Caco-2 (cell line): ENCODE measurements at regions of chr7 and their contacts with region 1.

Region 1: GRCh38 chr7:151244196-151244840 is 4.2 kb downstream of the SMARCD3 start:
- DNase-seq: peak in 1 of 2 experiments; percentile 49
- H3K4me3 ChIP-seq: no peak overlapping the region
- H3K4me3 Mint-ChIP-seq: no peak overlapping the region
- H3K27ac Mint-ChIP-seq: no peak overlapping the region
- H3K4me1 ChIP-seq: peaks cover 8% of the 10 kb centered on the region; the same call in 1 of the 2 replicates
- H3K4me1 Mint-ChIP-seq: peaks cover 16% of the 10 kb centered on the region
- H3K27me3 ChIP-seq: no peaks in the 10 kb centered on the region
- H3K27me3 Mint-ChIP-seq: no peaks in the 10 kb centered on the region
- CTCF ChIP-seq: peak; percentile 74

Region 2: DNA sequence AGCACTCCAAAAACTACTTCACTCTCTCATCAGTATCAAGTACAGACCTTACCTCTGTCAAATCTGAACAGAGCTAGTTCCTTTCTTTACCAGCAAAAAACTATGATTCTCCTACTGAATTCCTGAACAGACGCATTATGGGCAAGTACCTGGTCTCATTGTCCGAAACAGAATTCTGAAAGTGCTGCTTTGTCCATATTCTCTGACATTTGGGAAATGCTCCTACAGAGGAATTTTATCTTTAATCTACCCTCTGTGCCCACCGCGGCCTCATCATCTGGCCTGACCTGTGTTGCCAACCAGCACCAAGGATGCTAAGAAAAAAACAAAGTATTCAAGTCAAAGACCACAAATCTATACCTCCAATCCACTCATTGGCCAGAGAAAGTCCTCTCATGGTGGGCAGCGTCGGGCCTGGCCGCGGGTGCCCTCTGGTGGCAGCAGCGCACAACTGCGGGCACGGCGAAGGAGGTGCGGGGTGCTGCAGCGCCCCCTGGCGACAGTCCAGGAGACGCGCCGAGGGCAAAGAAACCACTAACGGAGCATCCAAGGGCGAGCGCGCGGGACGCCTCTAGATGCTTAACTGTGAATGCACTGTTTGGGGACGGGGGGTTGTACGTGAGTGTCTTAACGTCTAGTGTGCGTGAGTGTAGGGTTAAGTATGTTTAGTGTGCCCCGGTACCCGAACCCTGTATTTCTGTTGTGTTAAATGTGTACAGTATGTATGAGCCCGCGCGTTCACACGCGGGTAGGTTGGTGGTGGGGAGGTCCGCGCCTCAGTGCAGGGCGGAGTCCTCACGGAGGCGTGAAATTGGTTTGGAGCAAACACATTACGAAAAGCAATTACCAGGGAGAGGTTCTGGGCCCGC is 71.8 kb before region 1 on chr7:
- CTCF ChIA-PET with region 1: no interaction called
- POLR2A ChIA-PET with region 1: no interaction called
- intact Hi-C with region 1: loop called (anchors 2 kb)
- DNase-seq: peak; percentile 63 to 84
- H3K4me3 ChIP-seq: no peak overlapping the region
- H3K4me3 Mint-ChIP-seq: no peak overlapping the region
- H3K27ac Mint-ChIP-seq: no peak overlapping the region
- H3K4me1 ChIP-seq: no peaks in the 10 kb centered on the region
- H3K4me1 Mint-ChIP-seq: peaks cover 5% of the 10 kb centered on the region
- H3K27me3 ChIP-seq: peaks cover 4% of the 10 kb centered on the region
- H3K27me3 Mint-ChIP-seq: peaks cover 33% of the 10 kb centered on the region
- CTCF ChIP-seq: peak; percentile 100

Region 3: DNA sequence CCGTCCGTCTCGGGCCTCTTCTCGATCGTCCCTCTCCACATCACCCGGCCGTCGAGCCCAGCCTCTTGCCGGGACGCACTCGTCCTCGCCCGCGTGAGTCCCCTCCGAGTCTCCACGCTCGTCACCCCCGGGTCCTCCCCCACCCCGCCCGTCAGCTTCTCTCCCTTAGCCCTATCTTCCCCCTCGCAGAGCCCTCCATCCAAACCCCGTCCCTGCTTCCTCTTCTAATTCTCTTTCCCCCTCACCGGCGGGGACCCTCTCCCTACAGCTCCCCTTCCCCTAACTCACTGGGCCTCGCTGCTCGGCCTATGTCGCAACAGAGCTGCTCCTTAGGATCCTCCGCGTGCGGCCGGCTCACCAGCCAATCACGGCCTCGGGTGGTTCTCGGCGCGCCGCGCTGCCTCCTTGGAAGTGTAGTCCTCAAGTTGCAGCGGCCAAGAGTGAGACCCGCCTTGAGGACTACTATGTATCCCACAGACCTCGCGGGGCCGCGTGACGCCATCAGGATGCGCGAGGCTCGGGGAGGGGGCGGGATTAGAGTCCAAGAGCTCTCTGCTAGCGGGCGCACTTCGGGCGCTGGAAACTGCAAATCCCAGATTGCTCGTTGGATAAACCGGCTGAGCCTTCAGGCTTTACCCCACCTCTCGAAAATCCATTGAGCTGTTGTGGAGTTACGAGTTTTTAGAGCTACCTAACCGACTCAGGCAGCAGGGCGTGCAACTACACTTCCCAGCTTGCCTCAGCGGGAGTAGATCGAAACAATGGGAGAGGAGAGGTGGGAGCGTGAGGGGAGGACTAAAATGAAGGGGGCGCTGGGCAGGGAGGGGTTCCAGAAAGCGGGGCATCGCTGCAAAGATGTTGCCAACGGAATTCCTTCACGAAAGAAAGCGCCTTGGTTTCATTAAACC is 17.2 kb before region 1 on chr7 and contains the start of gene ABCF2:
- CTCF ChIA-PET with region 1: interaction called, 22 read pairs
- POLR2A ChIA-PET with region 1: interaction called, 9 read pairs
- intact Hi-C with region 1: loop called (anchors 1 kb)
- DNase-seq: peak; percentile 98 to 99
- H3K4me3 ChIP-seq: peak within 1 kb of the TSS; percentile 81
- H3K4me3 Mint-ChIP-seq: peak within 1 kb of the TSS; percentile 88
- H3K27ac Mint-ChIP-seq: peak within 1 kb of the TSS; percentile 82
- H3K4me1 ChIP-seq: peaks cover 15% of the 10 kb centered on the region
- H3K4me1 Mint-ChIP-seq: peaks cover 21% of the 10 kb centered on the region
- H3K27me3 ChIP-seq: no peaks in the 10 kb centered on the region
- H3K27me3 Mint-ChIP-seq: no peaks in the 10 kb centered on the region
- CTCF ChIP-seq: no peak
- total RNA-seq, gene ABCF2: 50.8 and 57.8 TPM in 2 replicates

Region 4: GRCh38 chr7:151304856-151305255 is 60.5 kb after region 1 on chr7:
- CTCF ChIA-PET with region 1: interaction called, 3 read pairs
- POLR2A ChIA-PET with region 1: no interaction called
- intact Hi-C with region 1: loop called (anchors 1 kb)
- DNase-seq: no peak
- H3K4me3 ChIP-seq: no peak overlapping the region
- H3K4me3 Mint-ChIP-seq: peak overlapping the region; percentile 4
- H3K27ac Mint-ChIP-seq: no peak overlapping the region
- H3K4me1 ChIP-seq: no peaks in the 10 kb centered on the region
- H3K4me1 Mint-ChIP-seq: no peaks in the 10 kb centered on the region
- H3K27me3 ChIP-seq: no peaks in the 10 kb centered on the region; the same call in none of the 2 replicates
- H3K27me3 Mint-ChIP-seq: peaks cover 26% of the 10 kb centered on the region
- CTCF ChIP-seq: no peak

Region 5: GRCh38 chr7:151351027-151351426 is 106.7 kb after region 1 on chr7:
- CTCF ChIA-PET with region 1: no interaction called
- POLR2A ChIA-PET with region 1: no interaction called
- intact Hi-C with region 1: no loop called
- DNase-seq: peak; percentile 45 to 68
- H3K4me3 ChIP-seq: no peak overlapping the region
- H3K4me3 Mint-ChIP-seq: no peak overlapping the region
- H3K27ac Mint-ChIP-seq: no peak overlapping the region
- H3K4me1 ChIP-seq: peaks cover 25% of the 10 kb centered on the region
- H3K4me1 Mint-ChIP-seq: peaks cover 16% of the 10 kb centered on the region
- H3K27me3 ChIP-seq: no peaks in the 10 kb centered on the region
- H3K27me3 Mint-ChIP-seq: no peaks in the 10 kb centered on the region
- CTCF ChIP-seq: peak; percentile 51 to 54